Lower leg skin (tissue), 4 donors: ENCODE measurements at regions of chr6 and their contacts with region 1.

Region 1: DNA sequence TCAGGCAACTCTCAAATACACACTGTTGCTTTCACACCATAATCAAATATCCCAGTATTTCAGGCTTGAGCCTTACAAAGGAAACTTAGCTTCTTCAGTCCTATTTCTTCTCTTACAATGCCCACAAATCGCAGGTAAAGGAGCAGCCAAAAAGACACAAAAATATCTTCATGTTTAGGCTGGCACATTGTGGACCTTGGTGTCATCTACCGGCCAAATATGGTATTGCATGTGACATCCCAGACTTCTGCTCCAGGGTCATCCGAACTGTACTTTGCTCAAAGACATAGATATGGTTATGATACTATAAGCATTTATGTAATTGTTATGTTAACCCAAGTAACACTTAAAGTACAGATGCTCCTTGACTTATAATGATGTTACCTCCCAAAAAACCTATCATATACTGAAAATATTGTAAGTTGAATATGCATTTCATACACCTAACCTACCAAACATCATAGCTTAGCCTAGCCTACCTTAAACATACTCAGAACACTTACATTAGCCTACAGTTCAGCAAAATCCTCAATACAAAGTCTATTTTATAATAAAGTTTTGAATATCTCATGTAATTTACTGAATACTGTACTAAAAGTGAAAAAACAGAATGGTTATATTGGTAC is 4.6 kb downstream of the OR2H2 start:
- DNase-seq: peak in 1 of 2 donors; percentile 50
- H3K4me3 ChIP-seq: no peak overlapping the region
- CTCF ChIP-seq: peak in 1 of 3 donors; percentile 85
- POLR2A ChIP-seq: no peak

Region 2: GRCh38 chr6:28673800-28674671 is 915.5 kb before region 1 on chr6:
- intact Hi-C with region 1: loop called (anchors 10 kb)
- DNase-seq: no peak
- H3K4me3 ChIP-seq: no peak overlapping the region
- CTCF ChIP-seq: no peak
- POLR2A ChIP-seq: no peak